OCI-LY7 (cell line): ENCODE measurements at regions of chr1 and their contacts with region 1.

Region 1: GRCh38 chr1:92960395-92961130 is 699 bp downstream of the DIPK1A start:
- DNase-seq: peak; percentile 90
- H3K4me3 ChIP-seq: peak overlapping the region; percentile 93
- H3K27ac ChIP-seq: peak overlapping the region; percentile 92
- H3K4me1 ChIP-seq: peaks cover 73% of the 10 kb centered on the region
- CTCF ChIP-seq: peak; percentile 91

Region 2: GRCh38 chr1:92759361-92759760 is 201.2 kb before region 1 on chr1:
- CTCF ChIA-PET with region 1: no interaction called
- POLR2A ChIA-PET with region 1: no interaction called
- intact Hi-C with region 1: no loop called
- DNase-seq: no peak
- H3K4me3 ChIP-seq: no peak overlapping the region
- H3K27ac ChIP-seq: no peak overlapping the region
- H3K4me1 ChIP-seq: no peaks in the 10 kb centered on the region
- CTCF ChIP-seq: no peak

Region 3: DNA sequence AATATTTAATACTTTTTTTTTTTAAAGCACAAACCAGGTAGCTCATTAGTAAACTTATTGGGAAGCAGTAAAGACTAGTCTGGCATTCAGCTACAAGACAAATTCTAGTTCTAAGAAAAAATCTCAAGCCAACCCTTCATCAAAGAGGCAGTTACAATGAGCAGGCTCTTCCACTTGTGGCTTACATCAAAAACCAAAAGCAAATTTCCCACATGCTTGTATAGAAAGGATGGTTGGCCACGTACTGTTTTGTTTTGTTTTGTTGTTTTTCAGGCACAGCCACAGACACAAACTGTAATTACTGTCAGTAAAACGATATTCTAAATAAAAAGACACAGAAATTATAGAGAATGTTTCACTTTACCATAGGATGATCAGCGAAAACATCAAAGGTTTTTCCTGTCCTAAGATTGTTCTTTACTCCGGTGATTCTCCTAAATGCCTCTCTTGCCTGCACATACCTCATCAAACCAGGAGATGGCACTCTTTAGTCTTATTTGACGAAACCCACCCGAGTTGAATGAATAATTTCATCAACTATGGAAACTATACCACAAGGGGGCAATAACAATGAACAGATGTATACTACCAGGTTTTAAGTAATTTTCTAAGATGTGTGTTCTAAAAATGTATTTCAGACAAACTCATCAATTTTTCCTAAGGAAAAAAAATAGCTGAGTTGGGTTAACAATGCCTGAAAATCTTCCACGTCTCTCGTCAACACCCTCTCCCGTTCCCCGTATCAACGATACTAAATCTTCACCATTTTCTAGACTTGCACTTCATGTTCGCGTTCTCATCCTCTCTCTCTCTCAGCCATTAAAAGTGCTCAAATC is 101.8 kb before region 1 on chr1:
- CTCF ChIA-PET with region 1: interaction called, 7 read pairs
- POLR2A ChIA-PET with region 1: interaction called, 38 read pairs
- intact Hi-C with region 1: loop called (anchors 1 kb)
- DNase-seq: peak; percentile 91
- H3K4me3 ChIP-seq: peak overlapping the region; percentile 56
- H3K27ac ChIP-seq: peak overlapping the region; percentile 65
- H3K4me1 ChIP-seq: peaks cover 28% of the 10 kb centered on the region
- CTCF ChIP-seq: peak; percentile 100

Region 4: DNA sequence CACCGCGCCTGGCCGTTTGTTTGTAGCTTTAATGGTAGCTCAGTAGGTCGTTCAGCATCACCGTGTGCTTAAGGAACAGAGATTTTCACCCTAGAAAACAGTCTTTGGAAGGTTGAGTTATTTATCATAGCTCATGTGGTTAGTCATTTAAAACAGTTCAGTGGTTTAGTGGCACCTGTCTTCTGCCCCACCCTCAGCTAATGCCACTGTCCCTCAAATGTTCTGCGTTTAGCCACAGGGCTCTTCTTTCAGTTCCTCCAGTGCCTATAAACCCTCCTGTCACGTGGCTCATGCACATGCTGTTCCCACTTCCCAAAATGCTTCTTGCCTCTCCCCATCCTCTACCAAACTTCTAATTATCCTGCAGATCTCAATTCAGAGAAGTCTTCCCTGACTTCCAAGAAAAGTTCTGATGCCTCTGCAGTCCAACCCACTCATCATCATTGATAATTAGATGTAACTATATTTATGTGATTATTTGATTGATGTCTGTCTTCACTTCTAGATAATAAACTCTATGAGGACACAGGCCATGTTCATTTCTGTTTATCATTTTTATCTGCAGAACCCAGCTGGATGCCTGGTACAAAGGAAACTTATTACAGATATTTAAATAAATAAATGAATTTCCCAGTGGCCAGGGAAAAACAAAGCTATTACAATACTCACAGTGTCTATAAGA is 15.1 kb after region 1 on chr1:
- CTCF ChIA-PET with region 1: interaction called, 10 read pairs
- POLR2A ChIA-PET with region 1: interaction called, 118 read pairs
- intact Hi-C with region 1: loop called (anchors 1 kb)
- DNase-seq: peak; percentile 92
- H3K4me3 ChIP-seq: peak overlapping the region; percentile 44
- H3K27ac ChIP-seq: peak overlapping the region; percentile 96
- H3K4me1 ChIP-seq: peaks cover 99% of the 10 kb centered on the region
- CTCF ChIP-seq: no peak

Region 5: DNA sequence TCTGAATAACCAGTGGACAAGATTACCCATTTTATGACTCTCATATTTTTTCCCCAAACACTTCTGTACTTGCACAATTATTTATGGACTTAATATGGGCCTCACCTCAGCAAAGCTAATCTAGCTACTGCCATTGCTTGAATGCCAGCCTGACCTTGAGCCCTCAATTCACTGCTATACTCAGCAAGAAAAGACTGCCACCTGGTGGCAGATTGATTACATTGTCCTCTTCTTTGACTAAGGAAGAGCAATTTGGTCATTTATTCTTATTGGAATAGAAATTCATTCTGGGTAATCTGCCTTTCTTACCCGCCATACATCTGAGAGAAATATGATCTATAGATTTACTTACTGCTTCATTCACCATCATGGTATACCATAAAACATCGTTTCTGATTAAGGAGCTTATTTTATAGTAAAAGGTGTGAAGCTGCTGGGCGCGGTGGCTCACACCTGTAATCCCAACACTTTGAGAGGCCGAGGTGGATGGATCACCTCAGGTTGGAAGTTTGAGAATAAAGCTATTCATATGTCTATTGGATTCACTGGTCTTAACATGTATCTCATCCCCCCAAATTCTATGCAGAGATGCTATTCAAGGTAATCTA is 33.6 kb after region 1 on chr1:
- CTCF ChIA-PET with region 1: interaction called, 18 read pairs
- POLR2A ChIA-PET with region 1: interaction called, 25 read pairs
- intact Hi-C with region 1: loop called (anchors 1 kb)
- DNase-seq: peak; percentile 96
- H3K4me3 ChIP-seq: no peak overlapping the region
- H3K27ac ChIP-seq: peak overlapping the region; percentile 26
- H3K4me1 ChIP-seq: peaks cover 47% of the 10 kb centered on the region
- CTCF ChIP-seq: peak; percentile 98

Region 6: GRCh38 chr1:93692983-93693591 is 732.5 kb after region 1 on chr1:
- CTCF ChIA-PET with region 1: no interaction called
- POLR2A ChIA-PET with region 1: no interaction called
- intact Hi-C with region 1: loop called (anchors 5 kb)
- DNase-seq: peak; percentile 65
- H3K4me3 ChIP-seq: peak overlapping the region; percentile 7
- H3K27ac ChIP-seq: peak overlapping the region; percentile 80
- H3K4me1 ChIP-seq: peaks cover 84% of the 10 kb centered on the region
- CTCF ChIP-seq: no peak